Activated CD8-positive, alpha-beta memory T cell treated with anti-CD3 and anti-CD28 coated beads, Interleukin-2, amount 10 ng/mL, durations not matched to agents 7 days and 5 days (primary cell): ENCODE measurements at regions of chr15 and their contacts with region 1.

Region 1: GRCh38 chr15:38699633-38700230 is 135.1 kb upstream of the RASGRP1 start:
- DNase-seq: peak; percentile 89
- ATAC-seq: peak; percentile 35
- H3K4me3 Mint-ChIP-seq: peak overlapping the region; percentile 86
- H3K27ac Mint-ChIP-seq: peak overlapping the region; percentile 84
- H3K4me1 Mint-ChIP-seq: peaks cover 69% of the 10 kb centered on the region
- H3K27me3 Mint-ChIP-seq: no peaks in the 10 kb centered on the region

Region 2: DNA sequence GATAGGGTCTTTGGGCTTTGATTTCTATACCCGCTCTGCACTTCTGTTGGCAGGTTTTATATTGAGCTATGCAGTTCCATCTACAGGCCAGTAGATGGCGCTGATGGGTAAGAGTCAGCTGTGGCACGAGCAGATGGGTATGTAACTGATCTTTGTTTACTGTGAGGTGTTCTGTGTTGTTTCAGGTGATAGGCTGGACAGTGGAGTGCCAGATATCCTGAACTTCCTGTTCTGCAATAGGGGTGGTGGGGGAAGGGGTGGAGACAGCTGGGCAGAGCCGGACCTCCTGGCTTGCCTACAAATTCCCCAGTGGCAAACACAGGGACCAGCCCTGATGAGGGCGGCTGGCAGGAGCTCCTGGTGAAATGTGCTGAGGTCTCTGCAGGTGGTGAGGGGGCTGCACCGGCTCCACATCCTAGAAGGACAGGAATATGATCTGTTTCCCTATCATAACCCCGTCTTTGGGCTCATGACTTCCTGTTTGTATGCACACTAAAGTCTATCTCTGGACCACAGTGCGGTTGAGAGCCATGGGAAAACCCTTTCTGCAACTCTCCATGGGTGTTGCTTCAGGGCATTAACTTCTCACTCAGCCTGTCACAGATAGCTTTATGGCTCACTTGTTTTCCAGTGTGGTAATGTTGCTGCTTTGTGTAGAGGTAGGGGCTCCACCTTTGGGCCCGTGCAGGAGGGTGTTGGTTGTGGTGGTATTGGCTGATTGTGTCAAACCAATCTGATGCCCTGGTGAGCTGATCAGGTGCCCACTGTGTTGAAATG is 259.2 kb before region 1 on chr15:
- CTCF ChIA-PET with region 1: interaction called, 143 read pairs
- DNase-seq: peak; percentile 63
- ATAC-seq: peak; percentile 90
- H3K4me3 Mint-ChIP-seq: no peak overlapping the region
- H3K27ac Mint-ChIP-seq: peak overlapping the region; percentile 7
- H3K4me1 Mint-ChIP-seq: peaks cover 8% of the 10 kb centered on the region
- H3K27me3 Mint-ChIP-seq: peaks cover 44% of the 10 kb centered on the region

Region 3: DNA sequence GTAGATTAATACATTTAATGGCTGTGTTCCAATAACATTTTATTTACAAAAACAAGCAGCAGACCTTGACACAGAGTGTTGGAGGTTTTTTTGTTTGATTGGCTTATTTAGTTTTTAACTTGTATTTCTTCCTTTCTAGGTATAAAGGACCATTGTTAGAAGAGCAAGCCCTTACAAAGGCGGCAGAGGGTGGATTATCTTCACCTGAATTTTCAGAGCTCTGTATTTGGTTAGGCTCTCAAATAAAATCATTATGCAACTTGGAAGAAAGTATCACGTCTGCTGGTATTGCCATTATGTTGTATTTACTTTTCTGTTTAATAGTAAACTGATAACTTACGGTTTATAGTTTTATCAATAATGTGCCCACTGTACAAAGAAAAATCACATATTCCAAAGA is 235.8 kb before region 1 on chr15:
- CTCF ChIA-PET with region 1: interaction called, 27 read pairs
- DNase-seq: no peak
- ATAC-seq: no peak
- H3K4me3 Mint-ChIP-seq: no peak overlapping the region
- H3K27ac Mint-ChIP-seq: no peak overlapping the region
- H3K4me1 Mint-ChIP-seq: peaks cover 28% of the 10 kb centered on the region
- H3K27me3 Mint-ChIP-seq: no peaks in the 10 kb centered on the region

Region 4: DNA sequence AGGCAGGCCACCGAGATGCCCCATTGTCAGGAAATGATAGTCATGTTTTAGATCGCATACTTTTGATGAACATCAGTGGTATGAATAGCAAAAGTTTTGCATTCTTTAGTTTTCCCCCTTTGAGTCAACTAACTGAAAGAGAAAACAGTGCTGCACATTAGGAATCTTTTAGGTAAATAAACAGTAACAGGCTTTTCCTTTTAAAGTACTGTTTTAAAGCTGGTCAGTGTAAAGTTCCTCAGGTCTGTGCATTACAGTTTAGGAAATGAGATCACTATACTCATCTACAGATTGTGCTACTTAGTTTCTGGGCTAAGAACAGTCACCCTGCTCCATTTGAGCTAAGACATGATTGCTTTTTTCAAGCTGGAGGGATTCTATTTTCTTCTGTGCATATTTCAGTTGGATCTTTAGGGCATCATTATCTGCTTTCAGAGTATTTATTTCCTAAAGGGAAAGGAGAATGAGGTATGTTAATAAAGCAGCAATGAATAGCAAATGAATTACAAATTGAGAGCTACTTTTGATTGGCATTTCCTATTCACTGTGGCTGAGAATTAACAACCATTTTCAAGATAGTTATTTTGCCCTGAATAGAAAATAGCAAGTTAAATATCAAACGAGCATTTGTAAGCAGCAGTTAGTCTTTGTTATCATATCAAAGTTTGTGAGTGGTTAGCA is 209.3 kb before region 1 on chr15:
- CTCF ChIA-PET with region 1: interaction called, 15 read pairs
- DNase-seq: no peak
- ATAC-seq: no peak
- H3K4me3 Mint-ChIP-seq: no peak overlapping the region
- H3K27ac Mint-ChIP-seq: peak overlapping the region; percentile 35
- H3K4me1 Mint-ChIP-seq: peaks cover 44% of the 10 kb centered on the region
- H3K27me3 Mint-ChIP-seq: no peaks in the 10 kb centered on the region

Region 5: GRCh38 chr15:38647683-38648082 is 52.0 kb before region 1 on chr15:
- CTCF ChIA-PET with region 1: interaction called, 13 read pairs
- DNase-seq: no peak
- ATAC-seq: no peak
- H3K4me3 Mint-ChIP-seq: no peak overlapping the region
- H3K27ac Mint-ChIP-seq: no peak overlapping the region
- H3K4me1 Mint-ChIP-seq: peaks cover 58% of the 10 kb centered on the region
- H3K27me3 Mint-ChIP-seq: no peaks in the 10 kb centered on the region

Region 6: DNA sequence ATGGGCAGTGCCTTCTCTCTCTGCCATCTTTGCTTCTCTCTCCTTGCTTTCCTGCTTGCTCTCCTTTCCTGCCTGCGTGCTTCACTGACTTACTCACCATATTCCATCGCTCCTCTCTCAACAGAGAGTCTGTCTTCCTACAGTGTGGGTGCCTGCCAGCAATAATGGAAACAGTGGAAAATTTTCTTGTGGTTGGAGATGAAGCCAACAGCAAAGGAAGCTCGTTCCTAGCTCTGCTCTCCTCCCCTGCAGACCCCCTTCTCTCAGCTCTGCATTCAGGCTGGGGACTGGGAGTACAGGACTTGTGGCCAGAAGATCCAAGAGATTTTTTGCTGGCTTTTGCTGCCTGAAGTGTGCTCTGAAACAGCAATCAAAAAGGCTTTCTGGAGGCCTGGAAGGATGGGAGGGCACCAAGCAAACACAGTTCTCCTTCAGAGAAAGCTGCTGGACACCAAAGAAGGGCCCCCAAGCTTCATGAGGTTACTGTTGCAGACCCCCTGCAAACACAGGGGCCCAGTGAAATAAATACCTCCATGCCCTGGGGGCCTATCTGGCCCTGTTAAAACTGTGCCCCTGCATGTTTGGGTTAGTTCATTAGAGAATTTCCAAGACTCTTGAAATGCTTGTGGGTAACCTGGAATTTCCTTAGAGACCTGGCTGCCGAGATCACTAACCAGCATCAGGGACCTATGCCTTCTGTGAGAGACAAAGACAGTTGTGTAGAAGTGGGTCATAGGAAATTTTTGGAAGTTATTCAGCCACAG is 14.8 kb after region 1 on chr15:
- CTCF ChIA-PET with region 1: interaction called, 15 read pairs
- DNase-seq: no peak
- ATAC-seq: no peak
- H3K4me3 Mint-ChIP-seq: no peak overlapping the region
- H3K27ac Mint-ChIP-seq: no peak overlapping the region
- H3K4me1 Mint-ChIP-seq: no peaks in the 10 kb centered on the region
- H3K27me3 Mint-ChIP-seq: no peaks in the 10 kb centered on the region

Region 7: DNA sequence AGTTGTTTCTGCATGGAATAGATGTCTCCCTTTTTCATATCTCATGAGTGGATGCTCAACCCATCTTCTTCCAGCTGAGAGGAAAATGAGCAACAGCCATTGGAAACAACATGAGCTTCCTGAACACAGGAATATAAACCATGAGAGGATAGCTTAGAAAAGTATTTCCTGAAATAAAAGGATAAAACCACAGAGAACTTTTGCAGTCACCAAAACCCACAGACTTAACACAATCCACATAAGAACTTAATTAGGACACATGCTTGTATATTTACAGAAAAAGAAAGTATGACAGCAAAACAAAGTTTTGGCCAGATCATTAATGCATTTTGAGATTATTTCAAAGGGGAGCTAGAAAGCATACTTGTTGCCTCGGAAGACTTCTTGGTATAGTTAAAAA is 45.4 kb after region 1 on chr15:
- CTCF ChIA-PET with region 1: no interaction called
- DNase-seq: no peak
- ATAC-seq: no peak
- H3K4me3 Mint-ChIP-seq: no peak overlapping the region
- H3K27ac Mint-ChIP-seq: no peak overlapping the region
- H3K4me1 Mint-ChIP-seq: no peaks in the 10 kb centered on the region
- H3K27me3 Mint-ChIP-seq: peaks cover 10% of the 10 kb centered on the region